ENCODE measurements at regions of chr7 and their contacts with region 1.

Region 1: DNA sequence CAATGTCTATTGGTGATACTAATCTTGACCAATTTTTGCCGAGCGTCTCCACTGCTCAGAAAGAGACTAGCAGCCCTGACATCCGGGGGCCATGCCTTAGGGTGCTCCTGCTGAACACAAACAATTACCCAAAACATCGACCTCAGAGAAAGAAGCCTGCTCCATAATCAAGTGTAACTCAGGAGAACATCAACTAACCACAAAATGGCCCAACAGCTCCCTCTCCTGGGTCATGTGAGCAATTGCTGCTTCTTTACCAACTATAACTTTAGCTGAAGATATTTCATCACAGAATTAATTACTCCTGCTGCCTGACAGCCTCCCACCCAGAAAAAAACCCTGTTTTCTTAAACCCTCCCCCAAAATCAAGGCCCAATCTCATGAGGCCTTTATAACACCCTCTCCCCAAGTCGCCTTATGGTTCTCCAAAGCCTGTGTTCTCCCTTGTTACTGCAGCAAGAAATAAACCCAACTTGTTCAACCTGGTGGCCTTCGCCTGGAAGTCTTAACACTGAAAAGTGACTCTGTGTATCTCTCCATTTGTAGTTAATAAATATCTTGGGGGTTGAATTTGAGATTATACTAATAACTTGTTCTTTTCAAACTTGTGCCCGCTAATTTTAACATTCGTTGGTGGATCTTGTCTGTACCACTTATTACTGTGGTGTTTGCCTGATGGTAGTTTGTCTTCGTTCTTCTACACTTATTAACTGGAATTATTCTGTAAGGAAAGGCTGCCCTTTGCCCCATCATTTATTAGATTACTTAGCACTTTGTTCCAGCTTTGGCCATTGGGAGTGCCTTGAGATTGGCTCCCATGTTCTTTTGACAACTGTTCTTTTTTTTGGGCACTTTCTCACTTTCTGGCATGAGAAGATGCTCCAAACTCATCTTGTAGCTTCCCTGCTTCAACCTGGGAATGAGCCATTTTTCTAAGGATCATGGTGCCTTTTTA is 21.2 kb upstream of the RAMP3 start:
- DNase-seq: peak; percentile 85
- CTCF ChIP-seq: peak; percentile 82

Region 2: GRCh38 chr7:44847508-44847920 is 288.9 kb before region 1 on chr7:
- CTCF ChIA-PET with region 1: interaction called, 20 read pairs
- POLR2A ChIA-PET with region 1: no interaction called
- DNase-seq: peak; percentile 87
- CTCF ChIP-seq: peak; percentile 83

Region 3: DNA sequence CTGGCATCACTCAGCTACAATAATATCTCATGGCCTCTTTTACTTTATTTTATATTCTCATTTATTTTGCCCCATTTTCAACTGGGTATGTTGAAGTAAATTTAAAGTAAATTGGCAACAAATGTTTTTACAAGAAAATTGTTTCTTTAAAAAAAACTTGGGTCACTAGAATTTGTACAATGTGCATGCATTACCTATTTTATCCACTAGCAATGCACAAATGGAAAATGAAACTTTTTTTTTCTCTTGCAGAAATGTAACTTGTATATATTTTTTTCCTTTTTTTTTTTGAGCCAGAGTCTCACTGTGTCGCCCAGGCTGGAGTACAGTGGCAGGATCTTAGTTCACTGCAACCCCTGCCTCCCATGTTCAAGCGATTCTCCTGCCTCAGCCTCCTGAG is 278.2 kb before region 1 on chr7:
- CTCF ChIA-PET with region 1: interaction called, 75 read pairs
- POLR2A ChIA-PET with region 1: no interaction called
- DNase-seq: no peak
- CTCF ChIP-seq: no peak

Region 4: DNA sequence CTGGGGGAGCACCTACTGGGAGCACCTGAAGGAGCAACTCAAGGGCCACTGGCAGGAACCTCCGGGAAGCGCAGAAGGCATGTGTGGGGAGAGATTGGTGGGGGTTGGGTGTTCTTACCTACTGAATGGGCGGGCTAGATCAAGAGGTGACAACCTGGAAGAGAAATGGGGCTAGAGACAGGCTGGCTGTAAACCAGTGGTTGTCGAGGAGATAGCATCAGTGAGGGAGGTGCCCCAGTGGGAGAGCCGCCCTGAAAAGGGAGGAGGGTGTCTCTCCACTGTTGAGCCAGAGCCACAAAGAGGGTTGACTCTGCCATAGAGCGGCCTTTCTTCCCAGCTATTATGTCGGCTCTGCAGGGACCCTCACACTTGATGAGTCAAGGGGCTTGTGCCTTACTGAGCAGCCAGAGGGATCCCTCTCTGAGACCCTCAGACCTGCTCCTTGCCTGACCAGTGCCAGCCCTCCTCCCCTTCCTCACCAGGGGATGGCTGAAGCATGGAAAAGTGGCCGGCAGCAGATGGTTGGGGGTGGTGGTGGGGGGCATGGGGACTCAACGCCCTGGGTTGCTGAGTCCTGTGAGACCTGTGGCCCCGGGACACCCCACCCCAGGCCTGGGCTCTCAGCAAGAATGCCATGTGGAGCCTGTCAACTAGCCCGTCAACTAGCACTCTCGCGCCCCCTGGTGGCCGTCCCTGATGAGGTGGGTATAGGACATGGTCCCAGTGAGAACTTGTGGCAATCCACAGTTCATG is 214.6 kb before region 1 on chr7:
- CTCF ChIA-PET with region 1: interaction called, 13 read pairs
- POLR2A ChIA-PET with region 1: no interaction called
- DNase-seq: peak; percentile 87
- CTCF ChIP-seq: peak; percentile 96

Region 5: DNA sequence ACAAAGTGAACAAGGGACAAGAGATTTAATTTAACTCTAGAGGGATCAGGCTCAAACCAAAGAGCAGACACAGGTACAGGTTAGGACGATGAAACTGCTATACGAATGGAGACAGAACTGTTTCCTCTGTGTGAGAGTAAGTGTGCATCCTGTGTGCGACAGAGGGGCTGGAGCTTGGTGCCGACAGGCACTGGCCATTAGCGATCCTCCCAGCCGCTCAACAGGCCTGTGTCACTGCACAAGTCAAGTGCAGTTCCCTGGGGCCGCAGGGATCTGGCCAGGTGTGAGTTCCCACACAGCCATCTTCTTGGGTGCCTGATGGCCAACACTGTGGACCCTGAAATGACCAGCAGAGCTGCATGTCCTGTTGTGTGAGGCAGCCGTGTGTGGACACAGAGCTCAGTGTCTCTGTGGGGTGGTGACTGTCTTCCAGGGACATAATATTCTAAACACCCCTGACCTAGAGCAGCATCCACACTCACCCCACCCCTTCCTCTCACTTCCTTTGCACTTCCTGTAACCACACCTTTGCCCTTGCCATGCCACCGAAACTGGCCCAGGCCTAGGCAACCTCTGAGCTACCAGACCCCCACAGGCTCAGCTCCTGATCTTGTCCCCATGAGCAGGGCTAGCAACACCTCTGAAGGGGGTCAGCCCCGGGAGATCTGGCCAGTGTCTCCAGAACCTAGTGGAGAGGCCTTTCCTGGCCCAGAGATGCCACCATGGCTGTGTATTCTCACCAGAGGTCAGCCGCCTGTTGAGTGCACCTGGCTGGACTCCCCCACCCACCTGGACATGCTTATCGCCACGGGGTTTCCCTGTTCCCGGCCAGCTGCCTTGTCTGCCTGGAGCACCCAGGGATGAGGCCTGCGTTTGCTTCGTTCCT is 13.2 kb before region 1 on chr7:
- CTCF ChIA-PET with region 1: interaction called, 41 read pairs
- POLR2A ChIA-PET with region 1: no interaction called
- DNase-seq: no peak
- CTCF ChIP-seq: no peak

Region 6: DNA sequence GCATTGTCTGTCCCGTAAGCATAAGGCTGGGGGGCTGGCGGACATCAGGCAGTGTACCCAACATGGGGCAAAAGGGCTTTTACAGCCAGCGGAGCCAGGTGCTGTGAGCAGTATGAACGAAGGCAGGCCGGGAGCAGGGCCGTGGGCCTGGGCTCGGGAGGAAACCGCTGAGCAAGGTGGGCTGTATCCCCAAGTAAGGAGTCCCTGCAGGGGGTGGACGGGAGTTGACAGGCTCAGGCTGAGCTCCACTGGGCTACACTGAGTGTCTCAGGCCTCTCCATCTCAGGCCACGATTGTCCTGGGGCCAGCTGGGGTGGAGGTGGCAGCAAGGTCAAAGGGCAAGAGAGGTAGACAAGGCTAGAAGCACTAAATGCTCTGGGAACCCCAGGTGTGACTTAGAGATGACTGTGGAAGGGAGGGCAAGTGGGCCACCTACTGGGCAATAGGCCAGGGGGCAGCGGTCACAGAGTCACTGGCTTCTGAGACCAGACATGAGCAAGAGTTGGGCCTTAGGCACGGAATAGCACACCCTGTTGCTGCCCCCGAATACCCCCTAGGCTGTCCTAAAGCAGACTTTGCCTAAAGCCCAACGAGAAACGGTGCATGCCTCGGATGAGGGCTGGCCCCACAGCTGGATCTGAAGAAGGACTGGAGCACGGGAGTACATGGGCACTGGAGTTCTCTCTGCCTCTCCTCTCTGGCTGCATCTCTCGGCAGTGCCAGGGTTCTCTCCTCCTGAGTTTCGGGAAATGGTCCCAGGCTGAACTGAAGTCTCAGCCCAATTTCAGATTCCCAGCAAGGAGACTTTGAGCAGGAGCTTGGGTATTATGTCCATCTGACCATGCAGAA is 10.4 kb after region 1 on chr7:
- CTCF ChIA-PET with region 1: interaction called, 45 read pairs
- POLR2A ChIA-PET with region 1: no interaction called
- DNase-seq: no peak
- CTCF ChIP-seq: peak; percentile 10

Region 7: DNA sequence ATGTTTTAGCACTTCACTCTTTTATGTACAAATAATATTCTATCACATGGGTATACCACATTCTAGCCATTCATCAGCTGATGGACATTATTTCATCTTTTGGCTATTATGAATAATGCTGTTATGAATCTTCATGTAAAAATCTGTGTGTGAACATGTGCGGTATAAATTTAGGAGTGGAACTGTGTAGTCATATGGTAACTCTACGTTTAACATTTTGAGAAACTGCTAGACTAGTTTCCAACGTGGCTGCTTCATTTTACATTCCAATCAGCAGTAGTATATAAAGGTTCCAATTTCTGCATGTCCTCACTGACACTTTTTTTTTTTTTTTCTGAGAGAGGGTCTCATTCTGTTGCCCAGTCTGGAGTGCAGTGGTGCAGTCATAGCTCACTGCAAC is 29.5 kb after region 1 on chr7:
- CTCF ChIA-PET with region 1: no interaction called
- POLR2A ChIA-PET with region 1: no interaction called
- DNase-seq: no peak
- CTCF ChIP-seq: no peak

Measured in GM10248 (cell line).